Gastrocnemius medialis (tissue), 4 donors: ENCODE measurements at regions of chr11 and their contacts with region 1.

Region 1: DNA sequence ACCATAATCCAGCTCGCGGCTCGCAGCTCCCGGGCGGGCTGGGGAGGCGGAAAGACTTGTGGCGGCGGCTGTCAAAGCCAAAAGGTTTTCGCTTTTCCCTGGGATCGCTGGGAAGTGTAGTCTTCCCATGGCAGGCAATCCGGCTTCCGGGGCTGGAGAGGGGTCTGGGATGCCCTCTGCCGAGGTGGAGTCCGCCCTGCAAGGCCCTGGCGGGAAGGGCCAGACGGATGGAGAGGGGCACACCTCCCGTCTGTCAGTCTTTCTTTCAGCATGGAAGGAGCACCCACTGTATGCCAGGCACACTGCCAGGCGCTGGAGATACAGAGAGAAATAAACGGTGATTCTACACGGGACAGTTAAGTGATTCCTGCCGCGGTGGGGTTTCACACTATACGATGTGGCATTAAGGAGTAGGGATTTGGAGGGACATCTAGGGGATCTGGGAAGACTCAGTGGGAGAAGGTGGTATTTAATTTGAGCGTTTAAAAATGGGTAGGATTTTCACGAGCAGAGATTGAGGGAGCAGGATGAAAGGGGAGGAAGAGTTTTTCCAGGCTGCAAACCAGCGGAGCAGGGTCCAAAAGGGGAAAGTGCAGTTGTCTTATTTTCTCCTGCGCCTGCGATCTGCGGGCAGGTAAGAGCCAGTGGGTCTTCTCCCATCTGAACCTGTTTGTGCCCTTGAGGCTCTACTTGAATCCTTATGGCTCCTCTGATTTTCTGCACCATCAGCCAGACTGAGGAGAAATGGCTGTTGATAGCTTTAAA is at the start of gene BACE1:
- DNase-seq: peak; percentile 67 to 73
- ATAC-seq: peak; percentile 91 to 93
- H3K4me3 ChIP-seq: peak within 1 kb of the TSS; percentile 62 to 94 (median 78)
- H3K27ac ChIP-seq: peak within 1 kb of the TSS; percentile 26 to 61 (median 50)
- H3K4me1 ChIP-seq: peaks cover 16 to 22% of the 10 kb centered on the region in 2 donors
- H3K27me3 ChIP-seq: no peaks in the 10 kb centered on the region
- CTCF ChIP-seq: peak in 3 of 5 experiments; percentile 13 to 35 (median 22)
- POLR2A ChIP-seq: no peak
- total RNA-seq, gene BACE1: 3.6 to 18.2 (median 11.1) TPM

Region 2: GRCh38 chr11:117249571-117249970 is 66.8 kb before region 1 on chr11:
- in situ Hi-C with region 1: loop called in 1 of 4 experiments (anchors 10 kb)
- intact Hi-C with region 1: no loop called
- DNase-seq: no peak
- ATAC-seq: no peak
- H3K4me3 ChIP-seq: no peak overlapping the region
- H3K27ac ChIP-seq: no peak overlapping the region
- H3K4me1 ChIP-seq: no peaks in the 10 kb centered on the region
- H3K27me3 ChIP-seq: no peaks in the 10 kb centered on the region
- CTCF ChIP-seq: no peak
- POLR2A ChIP-seq: no peak

Region 3: DNA sequence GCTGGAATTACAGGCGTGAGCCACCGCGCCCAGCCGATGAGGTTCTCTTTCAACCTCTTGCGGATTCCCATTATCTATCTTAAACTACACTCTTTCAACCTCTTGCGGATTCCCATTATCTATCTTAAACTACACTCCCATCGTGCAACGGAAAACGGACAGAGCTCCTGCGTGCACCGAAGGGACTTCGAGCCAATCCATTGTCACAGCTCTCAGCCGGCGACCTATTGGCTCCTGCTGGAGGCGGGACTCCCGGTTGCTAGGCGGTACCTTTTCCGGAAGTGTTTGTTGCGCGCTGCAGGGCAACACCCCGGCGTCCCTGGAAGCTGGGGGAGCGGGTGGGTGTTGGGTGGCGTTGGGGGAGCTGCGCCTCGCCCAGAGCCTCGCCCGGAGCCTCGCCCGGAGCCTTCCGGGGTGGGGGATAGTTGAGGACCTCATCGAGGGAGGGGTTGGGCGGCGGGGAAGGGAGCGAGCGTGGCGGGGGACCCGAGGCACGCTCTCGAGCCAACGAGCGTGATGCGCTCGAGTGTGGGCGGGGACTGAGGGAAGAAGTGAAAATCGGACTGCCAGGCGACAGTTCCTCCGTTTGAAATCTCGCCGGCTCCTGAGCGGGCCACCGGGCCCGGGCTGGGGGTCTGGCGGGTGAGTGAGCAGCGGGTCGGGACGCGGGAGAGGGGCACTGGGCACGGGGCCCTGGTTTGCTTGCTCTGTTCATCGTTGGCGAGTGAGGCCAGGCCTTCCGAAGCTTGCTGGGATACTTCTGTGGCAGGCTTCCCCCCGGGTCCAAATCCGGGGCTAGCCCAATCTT is 11.4 kb after region 1 on chr11 and contains the start of gene CEP164:
- in situ Hi-C with region 1: no loop called
- intact Hi-C with region 1: loop called (anchors 1 kb)
- DNase-seq: peak; percentile 94 to 95
- ATAC-seq: peak; percentile 98 to 99
- H3K4me3 ChIP-seq: peak within 1 kb of the TSS; percentile 66 to 90 (median 77)
- H3K27ac ChIP-seq: peak within 1 kb of the TSS; percentile 85 to 91 (median 86)
- H3K4me1 ChIP-seq: peaks cover 9% of the 10 kb centered on the region in 2 donors
- H3K27me3 ChIP-seq: no peaks in the 10 kb centered on the region
- CTCF ChIP-seq: no peak
- POLR2A ChIP-seq: peak; percentile 42 to 63
- total RNA-seq, gene CEP164: 3.4 to 9.2 (median 5.8) TPM